SK-N-SH (cell line): ENCODE measurements at regions of chr3 and their contacts with region 1.

Region 1: DNA sequence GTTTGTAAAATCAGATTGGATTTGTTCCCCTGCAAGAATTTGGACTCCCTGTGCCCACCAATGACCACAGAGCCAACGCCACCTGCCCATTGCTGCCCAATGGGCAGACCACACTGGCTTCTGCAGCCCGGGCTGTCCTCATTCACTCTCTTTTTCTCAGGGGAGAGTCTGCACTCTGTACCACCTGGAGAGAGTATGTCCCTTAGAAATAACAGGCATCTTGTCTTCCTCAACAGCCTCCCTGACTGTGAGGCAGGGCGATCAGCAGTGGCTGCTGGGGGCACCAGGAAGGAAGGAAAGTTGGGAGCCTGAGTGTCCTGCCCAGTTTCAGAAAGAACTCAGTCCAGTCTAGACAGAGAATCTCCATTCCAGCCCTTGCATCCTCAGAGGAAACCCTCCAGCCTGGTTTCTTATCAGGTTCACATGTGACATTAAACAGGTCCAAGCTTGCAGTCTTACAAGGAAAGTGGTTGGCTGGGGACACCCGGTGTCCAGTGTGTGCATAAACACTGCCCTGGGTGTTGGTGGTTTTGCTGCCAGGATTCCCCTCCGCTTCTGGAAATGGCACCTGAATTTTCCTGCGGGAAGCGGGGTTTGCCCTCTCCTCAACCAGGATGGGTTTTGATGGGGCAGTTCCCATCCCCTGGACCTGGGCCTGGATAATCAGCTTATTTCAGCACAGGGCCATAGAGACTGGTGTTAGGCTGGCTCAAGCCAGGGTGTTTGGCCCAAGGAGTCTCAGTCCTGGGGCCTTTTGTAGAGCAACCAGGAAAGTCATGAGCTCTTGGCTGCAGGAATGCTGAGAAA is 37.2 kb downstream of the SSUH2 start:
- DNase-seq: peak; percentile 82
- H3K4me3 ChIP-seq: no peak overlapping the region
- H3K27ac ChIP-seq: peak overlapping the region in 1 of 2 experiments; percentile 97; a peak in 2 of 4 replicates
- H3K4me1 ChIP-seq: peaks cover 5 to 44% of the 10 kb centered on the region in 2 experiments; a peak in 3 of 4 replicates
- H3K27me3 ChIP-seq: no peaks in the 10 kb centered on the region
- CTCF ChIP-seq: peak; percentile 66
- EP300 ChIP-seq: peak in 1 of 2 experiments; percentile 78; a peak in 2 of 4 replicates
- RAD21 ChIP-seq: peak; percentile 96

Region 2: DNA sequence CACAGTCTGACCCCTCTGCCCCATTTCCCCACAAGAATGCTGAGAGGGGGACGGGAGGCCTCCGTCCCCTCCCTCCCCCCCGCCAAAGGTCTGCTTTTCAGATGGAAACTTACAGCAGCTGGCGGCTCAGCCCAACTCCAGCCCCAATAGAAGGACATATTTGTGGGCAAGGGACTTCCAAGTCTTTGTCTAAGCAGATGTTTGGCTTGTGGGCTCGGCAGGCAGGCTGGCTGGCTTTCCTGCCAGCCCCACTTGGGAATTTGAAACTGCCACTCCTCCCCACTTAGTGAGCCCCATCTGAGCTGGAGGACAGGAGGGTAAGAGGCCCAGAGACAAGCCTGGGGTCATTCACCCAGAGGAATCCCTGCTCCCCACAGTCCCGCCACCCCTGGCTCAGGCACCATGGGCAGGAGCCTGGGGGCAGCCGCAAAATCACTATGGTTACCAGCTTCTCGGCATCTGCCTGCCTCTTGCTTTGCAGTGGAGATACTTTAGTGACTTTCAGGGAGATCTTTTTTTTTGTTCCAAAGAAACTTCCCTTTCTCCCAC is 52.2 kb before region 1 on chr3:
- CTCF ChIA-PET with region 1: interaction called, 15 read pairs
- POLR2A ChIA-PET with region 1: no interaction called
- DNase-seq: peak; percentile 72
- H3K4me3 ChIP-seq: no peak overlapping the region
- H3K27ac ChIP-seq: peak overlapping the region in 1 of 2 experiments; percentile 94; a peak in 2 of 4 replicates
- H3K4me1 ChIP-seq: peaks cover 0 to 40% of the 10 kb centered on the region in 2 experiments; a peak in 2 of 4 replicates
- H3K27me3 ChIP-seq: no peaks in the 10 kb centered on the region
- CTCF ChIP-seq: no peak
- EP300 ChIP-seq: no peak
- RAD21 ChIP-seq: no peak; the same call in 1 of the 2 replicates

Region 3: GRCh38 chr3:8622873-8623691 is 15.6 kb after region 1 on chr3:
- CTCF ChIA-PET with region 1: interaction called, 12 read pairs
- POLR2A ChIA-PET with region 1: no interaction called
- DNase-seq: peak; percentile 93
- H3K4me3 ChIP-seq: no peak overlapping the region; a peak in 1 of 4 replicates
- H3K27ac ChIP-seq: peak overlapping the region in 1 of 2 experiments; percentile 68; a peak in 2 of 4 replicates
- H3K4me1 ChIP-seq: peaks cover 0 to 26% of the 10 kb centered on the region in 2 experiments; a peak in 1 of 4 replicates
- H3K27me3 ChIP-seq: no peaks in the 10 kb centered on the region
- CTCF ChIP-seq: peak; percentile 94
- EP300 ChIP-seq: no peak
- RAD21 ChIP-seq: peak; percentile 93